GM10248 (cell line): ENCODE measurements at regions of chr4 and their contacts with region 1.

Region 1: GRCh38 chr4:75769036-75769435 is 44.7 kb downstream of the USO1 start:
- DNase-seq: no peak
- CTCF ChIP-seq: no peak

Region 2: DNA sequence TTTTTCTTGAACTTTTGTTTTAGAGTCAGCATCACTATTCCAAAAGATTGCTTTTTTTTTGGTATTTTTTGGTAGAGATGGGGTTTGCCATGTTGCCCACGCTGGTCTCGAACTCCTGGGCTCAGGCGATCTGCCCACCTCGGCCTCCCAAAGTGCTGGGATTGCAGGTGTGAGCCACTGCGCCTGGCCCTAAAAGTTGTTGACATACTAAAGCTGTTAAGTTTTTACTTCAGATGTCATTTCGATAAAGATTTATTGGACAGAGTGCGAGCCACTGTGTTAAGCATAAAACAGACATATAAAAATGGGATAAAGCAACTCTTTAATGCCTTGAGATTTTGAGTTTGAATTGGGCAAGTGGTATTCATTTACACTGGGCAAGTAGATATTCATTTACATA is 16.4 kb before region 1 on chr4:
- CTCF ChIA-PET with region 1: interaction called, 10 read pairs
- POLR2A ChIA-PET with region 1: no interaction called
- DNase-seq: no peak
- CTCF ChIP-seq: no peak

Region 3: DNA sequence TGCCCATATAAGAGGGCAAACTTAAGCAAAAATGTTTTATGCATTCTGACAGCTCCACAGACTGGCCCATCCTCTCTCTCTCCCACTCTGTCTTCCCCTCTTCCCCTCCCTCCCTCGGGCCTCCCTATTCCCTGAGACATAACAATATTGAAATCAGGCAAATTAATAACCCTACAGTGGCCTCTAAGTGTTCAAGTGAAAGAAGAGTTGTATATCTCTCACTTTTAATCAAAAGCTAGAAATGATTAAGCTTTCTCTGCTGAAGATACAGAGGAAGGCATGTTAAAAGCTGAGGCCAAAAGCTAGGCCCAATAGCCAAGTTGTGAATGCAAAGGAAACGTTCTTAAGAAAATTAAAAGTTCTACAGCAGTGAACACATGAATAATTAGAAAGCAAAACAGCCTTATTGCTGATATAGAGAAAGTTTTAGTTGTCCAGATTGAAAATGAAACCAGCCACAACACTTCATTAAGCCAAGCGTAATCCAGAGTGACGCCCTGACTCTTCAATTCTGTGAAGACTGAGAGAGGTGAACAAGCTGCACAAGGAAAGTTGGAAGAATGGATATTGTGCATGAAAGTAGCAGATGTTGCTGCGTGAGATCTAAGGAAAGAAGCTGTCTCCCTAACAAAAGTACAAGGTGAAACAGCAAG is 10.2 kb after region 1 on chr4:
- CTCF ChIA-PET with region 1: interaction called, 12 read pairs
- POLR2A ChIA-PET with region 1: no interaction called
- DNase-seq: no peak
- CTCF ChIP-seq: no peak

Region 4: GRCh38 chr4:76087007-76087769 is 318.2 kb after region 1 on chr4:
- CTCF ChIA-PET with region 1: no interaction called
- POLR2A ChIA-PET with region 1: no interaction called
- DNase-seq: peak; percentile 31
- CTCF ChIP-seq: peak; percentile 21